ENCODE measurements at regions of chr19 and their contacts with region 1.

Region 1: GRCh38 chr19:2610637-2611482 is 91.6 kb downstream of the GNG7 start:
- DNase-seq: peak; percentile 56 to 85
- ATAC-seq: peak; percentile 93 to 95
- H3K4me3 ChIP-seq: peak overlapping the region; percentile 37
- H3K27ac ChIP-seq: peak overlapping the region; percentile 94 to 98
- H3K4me1 ChIP-seq: peaks cover 15% of the 10 kb centered on the region; the same call in 2 of the 3 replicates
- CTCF ChIP-seq: peak; percentile 82
- EP300 ChIP-seq: no peak
- POLR2A ChIP-seq: no peak
- RAD21 ChIP-seq: peak; percentile 94 to 98

Region 2: DNA sequence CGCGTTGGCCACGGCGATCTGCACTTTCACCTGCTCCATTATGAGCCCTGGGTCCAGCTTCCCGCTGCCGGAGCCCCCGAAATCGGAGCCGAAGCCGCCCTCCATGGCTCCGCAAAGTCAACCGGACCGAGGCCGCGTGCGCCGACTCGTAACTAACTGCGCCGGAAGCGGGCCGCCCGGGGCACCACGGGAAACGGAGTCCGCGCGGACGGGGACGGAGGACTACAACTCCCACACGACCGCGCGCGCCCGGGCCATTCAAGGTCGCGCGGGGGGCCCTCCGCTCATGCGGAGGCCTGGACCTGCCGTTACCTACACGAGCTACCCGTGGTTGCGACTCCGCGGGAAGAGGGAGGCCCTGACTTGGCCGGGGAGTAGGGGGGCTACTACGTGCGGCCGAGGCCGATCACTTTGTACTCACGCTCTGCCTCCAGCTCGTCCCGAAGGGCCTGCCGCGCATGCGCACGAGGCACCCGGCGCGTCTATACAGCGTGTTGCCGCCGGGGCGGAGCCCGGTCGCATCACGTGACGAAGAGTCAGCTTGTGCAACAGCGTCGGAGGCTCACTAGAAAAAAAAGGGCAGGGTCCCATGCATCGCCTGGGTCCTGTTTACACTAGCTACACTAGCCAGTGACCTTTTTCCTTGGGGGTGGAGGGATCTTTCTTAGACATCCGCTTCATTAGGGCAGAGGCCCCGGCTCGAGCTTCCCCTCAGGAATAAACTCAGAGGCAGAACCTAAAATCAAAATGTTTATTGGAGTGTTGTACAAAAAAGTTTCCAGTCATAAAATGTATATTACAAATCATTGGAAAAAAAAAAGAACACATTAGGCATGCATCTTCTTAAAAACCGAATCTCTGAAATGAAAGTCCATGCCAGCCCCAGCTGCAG is 183.2 kb before region 1 on chr19 and contains the start of gene TIMM13:
- CTCF ChIA-PET with region 1: interaction called, 10 read pairs
- POLR2A ChIA-PET with region 1: interaction called, 6 read pairs
- DNase-seq: peak; percentile 78 to 94
- ATAC-seq: peak; percentile 87 to 90
- H3K4me3 ChIP-seq: peak within 1 kb of the TSS; percentile 95
- H3K27ac ChIP-seq: peak within 1 kb of the TSS; percentile 97 to 99
- H3K4me1 ChIP-seq: peaks cover 17% of the 10 kb centered on the region; the same call in 2 of the 3 replicates
- CTCF ChIP-seq: no peak
- EP300 ChIP-seq: no peak
- POLR2A ChIP-seq: peak; percentile 4; the same call in 1 of the 2 replicates
- RAD21 ChIP-seq: no peak
- polyA plus RNA-seq, gene TIMM13: 23.9 and 24.7 TPM in 2 replicates

Region 3: DNA sequence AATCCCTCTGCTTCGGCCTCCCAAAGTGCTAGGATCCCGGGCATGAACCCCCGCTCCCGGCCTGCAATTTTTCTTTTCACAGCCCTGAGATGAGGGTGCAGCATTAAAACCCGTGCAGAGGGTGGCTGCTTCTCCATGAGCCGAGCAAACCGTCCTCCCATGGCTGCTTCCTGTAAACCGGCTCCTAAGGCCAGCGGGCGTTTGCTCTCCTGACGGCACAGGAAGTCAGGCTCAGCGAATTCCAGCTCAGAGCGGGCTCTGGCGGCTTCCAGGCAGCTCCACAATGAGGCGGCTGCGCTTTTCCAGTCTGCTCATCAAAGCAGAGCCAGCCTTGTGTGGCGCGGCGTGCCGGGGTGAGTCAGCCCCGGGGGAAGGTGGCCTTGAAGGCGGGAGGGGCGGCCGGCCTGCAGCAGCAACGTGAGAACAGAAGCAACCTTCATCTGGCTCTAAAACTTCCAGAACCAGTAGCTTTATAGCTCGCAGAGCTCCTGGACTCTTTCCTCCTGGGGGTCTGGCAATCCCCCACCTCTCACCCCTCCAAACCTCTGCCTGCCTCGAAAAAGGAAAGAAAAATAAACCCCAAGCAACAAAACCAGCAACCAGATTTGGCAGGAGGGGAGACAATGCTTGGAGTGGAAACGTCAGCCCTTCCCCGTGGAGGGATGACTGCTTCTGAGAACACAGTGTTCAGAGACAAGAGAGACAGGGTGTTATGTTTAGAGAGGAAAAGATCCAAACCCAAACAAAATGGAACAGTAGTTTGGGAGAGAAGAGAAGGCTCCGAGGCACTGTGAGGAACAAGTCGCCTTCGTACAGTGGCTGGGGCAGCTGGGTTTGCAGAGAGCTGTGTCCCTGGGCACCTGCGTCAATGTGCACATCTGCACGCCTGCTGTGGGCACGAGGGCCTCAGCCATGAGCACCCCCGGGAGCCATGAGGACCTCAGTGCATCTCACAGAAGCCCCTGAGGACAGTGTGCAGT is 67.1 kb before region 1 on chr19:
- CTCF ChIA-PET with region 1: interaction called, 17 read pairs
- POLR2A ChIA-PET with region 1: interaction called, 3 read pairs
- DNase-seq: peak; percentile 73 to 93
- ATAC-seq: peak; percentile 81 to 82
- H3K4me3 ChIP-seq: peak overlapping the region; percentile 33; the same call in 2 of the 3 replicates
- H3K27ac ChIP-seq: peak overlapping the region; percentile 97 to 100
- H3K4me1 ChIP-seq: peaks cover 64% of the 10 kb centered on the region
- CTCF ChIP-seq: no peak
- EP300 ChIP-seq: peak in 1 of 2 experiments; percentile 37; a peak in 1 of 5 replicates
- POLR2A ChIP-seq: no peak
- RAD21 ChIP-seq: peak; percentile 39 to 58

Region 4: DNA sequence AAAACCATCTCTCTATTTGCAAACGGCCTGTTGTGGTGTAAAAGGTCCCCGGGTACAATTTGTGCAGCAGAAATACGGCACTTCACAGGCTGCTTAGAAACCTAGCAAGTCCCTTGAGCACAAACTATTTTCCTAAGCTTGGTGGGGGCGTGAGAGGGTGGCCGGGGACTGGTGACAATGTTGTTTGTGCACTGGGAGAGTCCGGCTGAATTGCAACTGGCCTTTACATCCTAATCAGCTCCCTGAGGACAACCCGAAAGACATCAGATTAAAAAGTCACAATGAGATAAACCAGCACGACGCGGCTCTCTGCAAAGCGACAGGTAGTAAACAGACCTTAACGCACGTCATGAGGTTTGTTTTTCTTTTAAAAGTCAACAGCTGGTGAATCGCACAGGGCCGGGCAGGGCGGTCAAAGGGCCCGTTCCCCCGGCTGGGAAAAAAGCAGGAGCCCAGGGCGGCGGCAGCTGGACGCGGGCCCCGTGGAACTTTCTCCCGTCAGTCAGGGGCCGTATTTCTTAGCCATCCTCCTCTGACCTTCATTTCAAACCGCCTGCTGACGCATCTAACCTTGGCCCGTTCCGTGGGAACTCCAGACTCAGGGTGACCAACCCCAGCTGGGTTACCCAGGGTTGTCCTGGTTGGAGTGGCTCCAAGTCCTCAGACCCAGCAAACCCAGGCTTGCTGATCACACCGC is 22.6 kb before region 1 on chr19:
- CTCF ChIA-PET with region 1: interaction called, 10 read pairs
- POLR2A ChIA-PET with region 1: interaction called, 3 read pairs
- DNase-seq: peak; percentile 43 to 76
- ATAC-seq: peak; percentile 65 to 79; a peak in 5 of 6 replicates
- H3K4me3 ChIP-seq: peak overlapping the region; percentile 21; the same call in 2 of the 3 replicates
- H3K27ac ChIP-seq: peak overlapping the region; percentile 70 to 79
- H3K4me1 ChIP-seq: peaks cover 38% of the 10 kb centered on the region
- CTCF ChIP-seq: no peak
- EP300 ChIP-seq: 0 out of 5 replicates have a peak, but pooled peaks of 1 of the 2 experiments have one; percentile 32
- POLR2A ChIP-seq: no peak
- RAD21 ChIP-seq: no peak

Region 5: DNA sequence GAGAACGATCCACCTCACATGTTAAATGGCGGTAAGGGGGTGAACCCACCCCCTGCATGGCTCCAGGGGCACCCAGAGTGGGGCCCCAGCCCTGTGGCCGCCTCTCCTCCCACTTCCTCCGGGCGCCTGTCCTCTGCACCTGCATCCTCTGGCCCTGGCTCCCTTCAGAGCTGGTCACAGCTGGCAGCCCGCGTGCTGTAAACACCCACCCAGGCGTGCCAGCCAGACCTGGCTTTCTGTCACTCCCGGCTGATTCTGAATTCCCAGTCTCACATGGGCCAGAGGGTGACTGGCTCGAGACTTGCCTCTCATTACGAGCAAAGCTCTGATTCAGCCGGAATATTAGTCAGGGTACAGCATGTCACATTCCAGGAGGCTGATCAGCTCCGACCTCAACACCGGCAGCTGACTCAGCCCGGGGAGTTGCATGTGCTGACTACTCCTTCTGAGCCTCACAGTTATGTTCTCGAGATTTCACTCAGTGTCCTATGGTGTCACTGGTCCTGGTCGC is 16.5 kb after region 1 on chr19:
- CTCF ChIA-PET with region 1: interaction called, 50 read pairs
- POLR2A ChIA-PET with region 1: no interaction called
- DNase-seq: peak; percentile 76 to 81
- ATAC-seq: peak; percentile 88 to 92
- H3K4me3 ChIP-seq: no peak overlapping the region
- H3K27ac ChIP-seq: peak overlapping the region; percentile 68 to 70; a peak in 5 of 6 replicates
- H3K4me1 ChIP-seq: peaks cover 15% of the 10 kb centered on the region
- CTCF ChIP-seq: no peak
- EP300 ChIP-seq: no peak
- POLR2A ChIP-seq: no peak
- RAD21 ChIP-seq: no peak

Region 6: GRCh38 chr19:2636897-2637683 is 26.2 kb after region 1 on chr19:
- CTCF ChIA-PET with region 1: interaction called, 50 read pairs
- POLR2A ChIA-PET with region 1: no interaction called
- DNase-seq: peak; percentile 52 to 67
- ATAC-seq: peak; percentile 56 to 82
- H3K4me3 ChIP-seq: no peak overlapping the region
- H3K27ac ChIP-seq: peak overlapping the region in 1 of 2 experiments; percentile 52; a peak in 1 of 6 replicates
- H3K4me1 ChIP-seq: peaks cover 10% of the 10 kb centered on the region; the same call in 1 of the 3 replicates
- CTCF ChIP-seq: peak; percentile 62
- EP300 ChIP-seq: no peak
- POLR2A ChIP-seq: no peak
- RAD21 ChIP-seq: peak; percentile 73 to 81

Measured in A549 (cell line).